MCF 10A (cell line): ENCODE measurements at regions of chr3 and their contacts with region 1.

Region 1: GRCh38 chr3:193780810-193781472 is 187.9 kb downstream of the OPA1 start:
- DNase-seq: peak; percentile 93
- H3K4me3 Mint-ChIP-seq: no peak overlapping the region
- H3K27ac Mint-ChIP-seq: peak overlapping the region; percentile 88
- H3K4me1 Mint-ChIP-seq: peaks cover 35% of the 10 kb centered on the region
- H3K27me3 Mint-ChIP-seq: peaks cover 10% of the 10 kb centered on the region
- CTCF ChIP-seq: peak; percentile 93

Region 2: DNA sequence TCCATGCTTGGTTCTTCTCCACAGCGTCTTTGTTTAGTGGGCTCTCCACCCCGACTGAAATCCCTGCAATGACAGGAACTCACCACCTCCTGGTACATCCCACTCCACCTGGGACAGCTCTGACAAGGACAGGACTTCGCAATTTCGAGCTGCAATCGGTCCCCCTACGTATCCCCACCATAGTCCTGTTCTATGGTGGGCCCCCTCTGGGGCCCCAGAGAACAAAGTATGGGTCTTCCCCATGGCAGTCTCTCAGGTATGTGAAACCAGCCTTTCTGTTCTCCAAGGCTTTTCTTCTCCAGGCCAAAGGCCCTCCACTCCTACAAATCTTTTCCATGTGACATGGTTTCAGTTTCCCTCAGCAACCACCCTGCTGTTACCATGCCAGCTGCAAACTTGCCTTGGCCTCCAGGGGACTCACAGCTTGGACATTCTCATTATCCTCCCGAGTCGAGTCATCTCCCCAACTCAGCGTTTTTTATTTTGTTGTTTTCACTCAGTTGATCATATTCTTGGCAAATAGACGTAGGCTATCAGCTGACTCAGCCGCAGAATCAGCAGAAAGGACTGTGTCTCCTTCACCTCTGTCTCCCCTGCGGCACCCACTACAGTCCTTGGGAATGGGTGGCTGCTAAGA is 45.3 kb after region 1 on chr3:
- CTCF ChIA-PET with region 1: interaction called, 8 read pairs
- POLR2A ChIA-PET with region 1: interaction called, 31 read pairs
- intact Hi-C with region 1: loop called (anchors 1 kb)
- DNase-seq: peak; percentile 81
- H3K4me3 Mint-ChIP-seq: peak overlapping the region; percentile 7
- H3K27ac Mint-ChIP-seq: peak overlapping the region; percentile 90
- H3K4me1 Mint-ChIP-seq: peaks cover 34% of the 10 kb centered on the region
- H3K27me3 Mint-ChIP-seq: no peaks in the 10 kb centered on the region
- CTCF ChIP-seq: no peak

Region 3: DNA sequence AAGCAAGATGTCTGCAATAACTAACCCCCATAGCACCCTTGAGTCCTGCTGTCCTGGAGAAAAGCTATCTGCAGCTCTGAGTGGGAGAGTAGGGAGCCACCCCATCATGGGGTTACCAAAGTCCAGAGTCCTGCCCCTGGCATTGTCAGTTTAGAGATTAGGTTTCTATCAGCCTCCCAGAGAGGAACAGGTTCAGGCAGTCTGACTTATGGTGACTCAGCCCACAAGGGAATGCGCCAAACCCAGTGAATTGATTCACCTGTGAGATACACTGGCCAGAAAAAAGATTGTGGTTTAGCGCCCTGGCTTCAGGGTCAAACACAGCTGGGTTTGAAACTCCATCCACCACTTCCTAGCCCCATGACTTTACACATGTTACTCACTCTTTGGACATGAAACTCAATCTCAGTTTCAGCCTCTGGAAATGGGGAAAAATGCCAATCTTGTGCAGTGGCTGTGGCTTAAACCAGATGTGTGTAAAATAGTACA is 91.4 kb after region 1 on chr3:
- CTCF ChIA-PET with region 1: interaction called, 17 read pairs
- POLR2A ChIA-PET with region 1: interaction called, 13 read pairs
- intact Hi-C with region 1: loop called (anchors 5 kb)
- DNase-seq: peak; percentile 99
- H3K4me3 Mint-ChIP-seq: no peak overlapping the region
- H3K27ac Mint-ChIP-seq: peak overlapping the region; percentile 27
- H3K4me1 Mint-ChIP-seq: peaks cover 68% of the 10 kb centered on the region
- H3K27me3 Mint-ChIP-seq: peaks cover 12% of the 10 kb centered on the region
- CTCF ChIP-seq: no peak

Region 4: DNA sequence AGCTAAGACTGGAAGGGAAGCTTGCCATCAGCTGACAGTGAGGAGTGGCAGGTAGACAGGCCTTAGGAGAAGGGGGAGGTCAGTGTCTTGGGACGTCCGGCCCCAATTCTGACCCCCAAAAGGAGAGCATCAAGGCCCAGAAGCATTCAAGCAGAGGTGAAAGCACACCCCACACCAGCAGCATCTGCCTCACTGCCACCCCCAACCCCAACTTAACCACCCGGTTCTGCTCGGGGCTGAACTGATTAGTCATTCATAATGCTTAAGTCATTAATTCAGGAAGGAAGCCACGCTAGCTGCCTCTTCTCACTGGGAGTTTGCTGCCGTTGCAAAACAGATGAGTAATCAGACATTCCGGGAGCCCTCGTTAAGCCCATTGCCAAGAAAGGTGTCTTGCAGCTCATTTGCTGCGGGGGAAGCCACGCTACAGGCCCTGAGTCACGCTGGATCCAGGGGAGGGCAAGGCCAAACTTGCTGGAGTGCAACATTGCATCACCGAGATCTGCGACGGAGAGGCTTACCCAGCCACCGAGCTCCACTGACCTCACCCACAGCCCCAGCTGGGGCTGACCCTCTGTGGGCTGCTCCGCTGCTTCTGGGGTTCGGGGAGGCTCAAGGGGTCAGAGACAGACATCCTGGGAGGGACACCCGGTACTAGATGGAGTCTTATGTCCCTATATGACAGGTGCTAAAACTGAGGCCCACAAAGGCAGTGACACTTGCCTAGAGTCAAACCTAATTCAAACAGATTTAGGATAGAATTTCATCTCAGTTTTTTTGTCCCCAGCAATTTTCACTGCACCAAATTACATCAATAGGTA is 308.6 kb after region 1 on chr3:
- CTCF ChIA-PET with region 1: interaction called, 5 read pairs
- POLR2A ChIA-PET with region 1: interaction called, 12 read pairs
- intact Hi-C with region 1: no loop called
- DNase-seq: peak; percentile 100
- H3K4me3 Mint-ChIP-seq: peak overlapping the region; percentile 57
- H3K27ac Mint-ChIP-seq: peak overlapping the region; percentile 89
- H3K4me1 Mint-ChIP-seq: peaks cover 25% of the 10 kb centered on the region
- H3K27me3 Mint-ChIP-seq: no peaks in the 10 kb centered on the region
- CTCF ChIP-seq: no peak

Region 5: GRCh38 chr3:194323785-194324735 is 543.1 kb after region 1 on chr3:
- CTCF ChIA-PET with region 1: interaction called, 107 read pairs
- POLR2A ChIA-PET with region 1: interaction called, 22 read pairs
- intact Hi-C with region 1: no loop called
- DNase-seq: peak; percentile 86
- H3K4me3 Mint-ChIP-seq: no peak overlapping the region
- H3K27ac Mint-ChIP-seq: no peak overlapping the region
- H3K4me1 Mint-ChIP-seq: no peaks in the 10 kb centered on the region
- H3K27me3 Mint-ChIP-seq: no peaks in the 10 kb centered on the region
- CTCF ChIP-seq: no peak

Region 6: GRCh38 chr3:194344012-194344411 is 563.1 kb after region 1 on chr3:
- CTCF ChIA-PET with region 1: interaction called, 48 read pairs
- POLR2A ChIA-PET with region 1: interaction called, 15 read pairs
- intact Hi-C with region 1: no loop called
- DNase-seq: peak; percentile 70
- H3K4me3 Mint-ChIP-seq: no peak overlapping the region
- H3K27ac Mint-ChIP-seq: no peak overlapping the region
- H3K4me1 Mint-ChIP-seq: no peaks in the 10 kb centered on the region
- H3K27me3 Mint-ChIP-seq: no peaks in the 10 kb centered on the region
- CTCF ChIP-seq: peak; percentile 88